Activated CD4-positive, alpha-beta T cell treated with anti-CD3 and anti-CD28 coated beads, Interleukin-2, amount 10 ng/mL, durations not matched to agents 7 days and 5 days (primary cell): ENCODE measurements at regions of chr5 and their contacts with region 1.

Region 1: GRCh38 chr5:119355685-119356611 is at the start of gene TNFAIP8:
- DNase-seq: peak; percentile 54
- H3K4me3 Mint-ChIP-seq: peak within 1 kb of the TSS; percentile 86
- H3K27ac Mint-ChIP-seq: peak within 1 kb of the TSS; percentile 87
- H3K4me1 Mint-ChIP-seq: peaks cover 93% of the 10 kb centered on the region
- H3K27me3 Mint-ChIP-seq: no peaks in the 10 kb centered on the region
- total RNA-seq, gene TNFAIP8: 167 to 184 TPM

Region 2: DNA sequence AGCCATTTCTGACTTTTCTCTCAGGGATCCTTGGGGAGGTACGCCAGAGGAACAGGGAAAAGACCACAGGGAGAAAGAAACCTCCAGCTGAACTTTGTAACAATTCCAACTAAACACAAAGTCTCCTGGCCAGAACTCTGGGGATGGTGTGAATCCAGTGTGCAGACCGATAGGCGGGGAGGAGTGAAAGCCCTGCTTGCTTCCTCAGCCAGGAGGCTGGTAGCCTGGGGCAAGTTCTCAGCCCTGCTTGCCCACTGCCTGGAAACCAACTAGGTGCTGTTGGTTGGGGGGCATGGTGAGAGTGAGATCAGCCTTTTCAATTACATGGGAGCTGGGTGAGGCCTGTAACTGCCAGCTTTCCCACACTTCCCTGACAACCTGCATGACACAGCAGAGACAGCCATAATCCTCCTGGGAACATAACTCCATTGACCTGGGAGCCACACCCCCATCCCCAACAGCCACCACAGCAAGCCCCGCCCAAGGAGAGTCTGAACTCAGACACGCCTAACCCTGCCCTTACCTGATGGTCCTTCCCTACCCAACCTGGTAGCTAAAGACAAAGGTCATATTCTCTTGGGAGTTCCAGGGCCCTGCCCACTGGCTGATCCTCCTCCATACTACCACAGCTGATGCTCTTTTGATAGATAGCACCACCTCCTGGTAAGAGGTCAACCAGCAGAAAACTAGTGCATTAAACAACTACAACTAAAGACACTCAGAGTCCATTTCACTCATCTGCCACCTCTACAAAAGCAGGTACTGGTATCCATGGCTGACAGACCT is 100.2 kb before region 1 on chr5:
- CTCF ChIA-PET with region 1: no interaction called
- POLR2A ChIA-PET with region 1: no interaction called
- DNase-seq: no peak
- H3K4me3 Mint-ChIP-seq: no peak overlapping the region
- H3K27ac Mint-ChIP-seq: no peak overlapping the region
- H3K4me1 Mint-ChIP-seq: no peaks in the 10 kb centered on the region
- H3K27me3 Mint-ChIP-seq: no peaks in the 10 kb centered on the region

Region 3: DNA sequence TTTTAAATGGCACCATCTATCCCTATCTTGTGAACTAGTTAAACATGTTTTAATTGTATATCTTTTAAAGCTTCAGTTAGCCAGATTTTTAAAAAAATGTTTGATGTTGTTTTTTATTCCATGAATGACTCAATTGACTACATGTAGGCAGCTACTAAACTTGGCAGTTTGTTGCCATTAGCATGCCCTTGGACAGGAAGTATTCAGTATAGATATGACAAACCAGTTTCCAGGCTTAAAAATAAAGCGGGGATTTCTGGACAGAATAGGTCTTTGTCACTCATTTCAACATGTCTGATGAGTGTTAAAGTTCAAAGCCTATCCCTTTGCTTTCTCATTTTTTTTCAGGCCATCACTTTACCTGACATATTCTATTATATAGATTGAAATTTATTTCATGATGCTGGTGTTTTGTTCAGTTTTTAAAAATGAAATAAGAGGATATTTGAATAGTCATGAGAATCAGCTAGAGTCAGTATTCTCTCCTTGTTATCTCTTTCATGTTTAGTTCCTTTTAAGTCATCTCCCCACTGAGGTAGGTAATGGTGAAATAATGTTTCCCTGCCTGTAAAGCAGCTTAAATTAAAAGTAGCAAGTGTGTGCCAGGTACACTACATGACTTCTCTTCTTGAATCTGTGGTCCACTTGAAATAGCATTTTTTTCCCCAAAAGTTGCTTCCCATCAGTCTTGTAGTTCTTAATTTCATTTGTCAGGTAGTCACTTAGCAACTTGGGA is 11.7 kb after region 1 on chr5:
- CTCF ChIA-PET with region 1: interaction called, 29 read pairs
- POLR2A ChIA-PET with region 1: no interaction called
- DNase-seq: no peak
- H3K4me3 Mint-ChIP-seq: peak overlapping the region; percentile 52
- H3K27ac Mint-ChIP-seq: peak overlapping the region; percentile 88
- H3K4me1 Mint-ChIP-seq: peaks cover 79% of the 10 kb centered on the region
- H3K27me3 Mint-ChIP-seq: no peaks in the 10 kb centered on the region